ENCODE measurements at regions of chr6 and their contacts with region 1.

Region 1: DNA sequence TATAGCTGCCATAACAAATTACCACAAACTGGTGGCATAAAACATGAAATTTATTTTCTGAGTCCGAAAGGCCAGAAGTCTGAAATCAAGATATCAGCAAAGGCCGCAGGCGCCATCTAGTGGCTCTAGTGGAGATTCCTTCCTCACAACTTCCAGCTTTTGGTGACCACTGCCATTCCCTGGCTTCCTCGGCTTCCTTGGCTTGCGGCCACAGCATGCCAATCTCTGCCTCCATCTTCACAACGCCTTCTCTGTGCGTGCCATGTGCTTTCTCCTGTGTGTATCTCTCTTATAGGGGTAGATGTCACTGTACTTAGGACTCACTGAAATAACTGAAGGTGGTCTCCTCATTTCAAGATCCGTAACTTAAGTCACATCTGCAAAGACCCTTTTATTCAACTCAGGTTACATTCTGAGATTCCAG is 5.4 kb upstream of the PLAGL1 start:
- DNase-seq: peak; percentile 84
- H3K4me3 ChIP-seq: no peak overlapping the region
- H3K27ac ChIP-seq: no peak overlapping the region
- H3K4me1 ChIP-seq: no peaks in the 10 kb centered on the region
- H3K27me3 ChIP-seq: peaks cover 5% of the 10 kb centered on the region
- CTCF ChIP-seq: peak; percentile 87

Region 2: DNA sequence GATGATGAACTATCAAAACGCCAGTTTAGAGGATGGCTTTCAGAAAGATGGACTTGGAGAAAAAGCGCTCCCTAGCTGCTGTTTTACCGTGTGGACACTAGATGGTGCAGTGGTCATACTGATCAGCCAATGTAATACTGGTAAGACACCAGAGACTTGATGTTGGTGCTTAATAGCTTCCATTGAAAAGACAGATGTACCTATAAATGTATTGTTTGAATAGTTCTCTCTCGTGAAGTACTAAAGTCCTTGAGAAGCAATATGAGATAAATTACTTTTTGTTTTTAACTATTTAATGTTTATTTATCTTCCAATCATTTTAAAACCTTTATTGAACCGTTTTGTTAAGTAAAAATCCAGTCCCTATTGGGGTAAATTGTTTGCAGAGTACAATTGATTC is 438.1 kb before region 1 on chr6:
- CTCF ChIA-PET with region 1: interaction called, 21 read pairs
- POLR2A ChIA-PET with region 1: no interaction called
- intact Hi-C with region 1: loop called (anchors 1 kb)
- DNase-seq: peak; percentile 74
- H3K4me3 ChIP-seq: no peak overlapping the region
- H3K27ac ChIP-seq: no peak overlapping the region
- H3K4me1 ChIP-seq: no peaks in the 10 kb centered on the region
- H3K27me3 ChIP-seq: no peaks in the 10 kb centered on the region
- CTCF ChIP-seq: peak; percentile 88

Region 3: DNA sequence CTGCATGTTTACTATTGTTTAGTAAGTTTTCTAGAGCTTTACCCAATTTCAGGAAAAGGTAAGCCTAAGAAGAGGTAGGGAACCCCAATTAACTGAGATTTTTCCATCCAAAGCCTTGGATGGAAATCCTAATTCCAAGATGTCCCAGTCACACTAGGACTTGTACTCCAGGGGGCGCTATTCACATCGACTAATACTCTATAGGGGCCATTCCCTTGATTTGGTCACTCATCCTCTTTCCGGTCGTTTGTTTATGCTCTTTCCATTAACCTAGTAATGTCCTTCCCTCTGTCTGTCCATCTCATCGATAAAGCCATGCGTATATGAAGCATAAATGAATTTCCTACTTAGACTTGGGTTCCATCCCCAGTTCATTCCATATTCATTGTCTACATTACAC is 421.2 kb before region 1 on chr6:
- CTCF ChIA-PET with region 1: no interaction called
- POLR2A ChIA-PET with region 1: no interaction called
- intact Hi-C with region 1: loop called (anchors 5 kb)
- DNase-seq: peak; percentile 44
- H3K4me3 ChIP-seq: no peak overlapping the region
- H3K27ac ChIP-seq: no peak overlapping the region
- H3K4me1 ChIP-seq: no peaks in the 10 kb centered on the region
- H3K27me3 ChIP-seq: no peaks in the 10 kb centered on the region
- CTCF ChIP-seq: peak; percentile 67

Region 4: GRCh38 chr6:143940011-143940597 is 73.4 kb before region 1 on chr6:
- CTCF ChIA-PET with region 1: interaction called, 6 read pairs
- POLR2A ChIA-PET with region 1: no interaction called
- intact Hi-C with region 1: loop called (anchors 1 kb)
- DNase-seq: peak; percentile 42
- H3K4me3 ChIP-seq: no peak overlapping the region
- H3K27ac ChIP-seq: no peak overlapping the region
- H3K4me1 ChIP-seq: no peaks in the 10 kb centered on the region
- H3K27me3 ChIP-seq: no peaks in the 10 kb centered on the region
- CTCF ChIP-seq: peak; percentile 56